WTC11 (cell line): ENCODE measurements at regions of chr7 and their contacts with region 1.

Region 1: DNA sequence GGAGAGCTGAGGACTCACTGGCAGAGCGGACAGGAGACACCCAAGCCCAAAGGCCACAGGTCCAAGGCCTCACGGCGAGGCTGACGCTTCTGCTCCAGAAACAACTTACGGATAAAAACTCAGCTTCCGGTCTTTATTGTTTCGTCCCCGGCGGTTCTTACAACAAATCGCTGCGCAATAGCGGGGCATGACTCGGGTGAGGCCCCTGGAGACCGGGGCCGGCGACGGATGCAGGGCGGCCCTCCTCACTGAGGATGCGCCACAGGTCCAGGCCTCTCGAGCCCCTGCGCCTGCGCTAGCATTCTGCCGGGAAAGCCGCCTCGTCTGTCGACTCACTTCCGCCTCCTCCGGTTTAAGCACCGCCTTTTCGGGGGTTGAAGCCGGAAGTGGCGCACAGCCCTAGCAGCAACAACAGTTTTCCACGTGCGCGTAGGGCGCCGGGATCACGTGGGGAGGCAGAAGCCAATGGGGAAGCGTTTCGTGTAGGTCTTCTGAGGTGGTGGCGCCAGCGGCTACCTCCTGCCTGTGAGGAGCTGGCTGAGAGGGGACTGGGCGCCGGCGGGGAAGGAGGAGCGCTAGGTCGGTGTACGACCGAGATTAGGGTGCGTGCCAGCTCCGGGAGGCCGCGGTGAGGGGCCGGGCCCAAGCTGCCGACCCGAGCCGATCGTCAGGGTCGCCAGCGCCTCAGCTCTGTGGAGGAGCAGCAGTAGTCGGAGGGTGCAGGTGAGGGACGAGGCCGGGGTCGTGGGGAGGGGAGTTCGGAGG is at the starts of genes DNAJB9 and THAP5:
- DNase-seq: peak; percentile 99
- ATAC-seq: peak; percentile 94
- H3K4me3 Mint-ChIP-seq: peak within 1 kb of the TSS; percentile 94
- H3K27ac Mint-ChIP-seq: peak within 1 kb of the TSS; percentile 98
- H3K4me1 Mint-ChIP-seq: peaks cover 27% of the 10 kb centered on the region
- H3K27me3 Mint-ChIP-seq: no peaks in the 10 kb centered on the region
- CTCF ChIP-seq: no peak
- total RNA-seq, gene DNAJB9: 6.6 to 8.2 TPM (median 7.1 TPM) in 3 replicates
- total RNA-seq, gene THAP5: 15.5 to 19.5 TPM (median 17.9 TPM) in 3 replicates

Region 2: DNA sequence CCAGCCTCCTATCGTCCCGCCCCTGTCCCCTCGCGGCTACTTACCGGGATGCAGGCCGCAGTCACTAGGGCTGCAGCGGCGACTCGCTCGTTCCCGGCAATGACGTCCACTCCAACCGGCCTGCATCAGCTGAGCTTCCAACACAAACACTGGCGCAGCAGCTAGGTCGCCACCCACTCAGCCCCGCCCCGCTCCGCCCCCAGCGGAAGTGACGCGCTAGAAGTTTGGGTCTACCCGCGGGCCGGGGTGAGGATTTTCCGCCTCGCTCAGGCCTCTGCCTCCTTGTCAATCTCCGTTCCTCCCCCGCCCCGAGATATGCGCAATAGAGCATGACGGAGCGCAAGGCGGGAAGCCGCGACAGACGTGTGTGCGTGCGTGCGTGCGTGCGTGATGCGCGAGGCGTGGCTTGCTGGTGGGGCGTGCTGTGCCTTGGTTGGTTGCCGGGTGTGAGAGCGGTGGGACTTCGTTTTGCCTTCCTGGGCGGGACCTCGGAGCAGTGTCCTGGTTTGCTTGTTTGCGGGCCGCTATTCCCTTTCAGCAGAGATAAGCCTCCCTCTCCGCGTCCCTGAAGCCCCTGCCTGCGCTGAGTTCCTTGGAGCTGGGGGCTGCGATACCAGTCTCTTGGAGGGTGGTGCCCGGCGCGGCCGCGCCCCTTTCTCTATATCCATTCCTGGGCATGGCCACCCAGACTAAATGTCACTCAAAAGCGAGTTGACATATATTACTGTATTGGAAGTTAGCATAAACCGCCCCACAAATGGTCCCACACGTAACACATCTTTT is 43.4 kb before region 1 on chr7 and contains the start of gene PNPLA8:
- CTCF ChIA-PET with region 1: no interaction called
- POLR2A ChIA-PET with region 1: interaction called, 23 read pairs
- DNase-seq: peak; percentile 100
- ATAC-seq: peak; percentile 88
- H3K4me3 Mint-ChIP-seq: peak within 1 kb of the TSS; percentile 91
- H3K27ac Mint-ChIP-seq: peak within 1 kb of the TSS; percentile 99
- H3K4me1 Mint-ChIP-seq: peaks cover 38% of the 10 kb centered on the region
- H3K27me3 Mint-ChIP-seq: no peaks in the 10 kb centered on the region
- CTCF ChIP-seq: no peak
- total RNA-seq, gene PNPLA8: 11.1 to 12.4 TPM (median 11.4 TPM) in 3 replicates

Region 3: DNA sequence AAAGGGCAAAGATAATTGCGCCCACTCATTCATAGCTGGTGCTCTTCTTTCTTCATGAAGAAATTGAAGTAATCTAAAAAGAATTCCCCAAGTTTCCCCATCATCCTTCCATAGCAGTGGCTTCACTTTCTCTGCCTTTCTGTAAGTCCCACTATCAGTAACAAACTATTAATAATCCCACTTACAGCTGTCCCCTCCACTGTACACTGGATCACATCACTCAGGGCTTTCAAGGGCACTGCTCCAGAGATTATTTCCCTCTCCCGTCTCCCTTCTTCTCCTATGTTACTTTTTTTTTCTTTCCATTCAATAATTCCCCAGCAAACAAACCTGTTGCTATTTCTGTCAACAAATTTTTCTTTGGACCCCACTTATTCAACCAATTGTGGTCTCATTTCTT is 16.3 kb after region 1 on chr7:
- CTCF ChIA-PET with region 1: no interaction called
- POLR2A ChIA-PET with region 1: no interaction called
- DNase-seq: no peak
- ATAC-seq: no peak
- H3K4me3 Mint-ChIP-seq: no peak overlapping the region
- H3K27ac Mint-ChIP-seq: no peak overlapping the region
- H3K4me1 Mint-ChIP-seq: peaks cover 22% of the 10 kb centered on the region
- H3K27me3 Mint-ChIP-seq: peaks cover 6% of the 10 kb centered on the region
- CTCF ChIP-seq: no peak